ENCODE measurements at regions of chr1 and their contacts with region 1.

Region 1: DNA sequence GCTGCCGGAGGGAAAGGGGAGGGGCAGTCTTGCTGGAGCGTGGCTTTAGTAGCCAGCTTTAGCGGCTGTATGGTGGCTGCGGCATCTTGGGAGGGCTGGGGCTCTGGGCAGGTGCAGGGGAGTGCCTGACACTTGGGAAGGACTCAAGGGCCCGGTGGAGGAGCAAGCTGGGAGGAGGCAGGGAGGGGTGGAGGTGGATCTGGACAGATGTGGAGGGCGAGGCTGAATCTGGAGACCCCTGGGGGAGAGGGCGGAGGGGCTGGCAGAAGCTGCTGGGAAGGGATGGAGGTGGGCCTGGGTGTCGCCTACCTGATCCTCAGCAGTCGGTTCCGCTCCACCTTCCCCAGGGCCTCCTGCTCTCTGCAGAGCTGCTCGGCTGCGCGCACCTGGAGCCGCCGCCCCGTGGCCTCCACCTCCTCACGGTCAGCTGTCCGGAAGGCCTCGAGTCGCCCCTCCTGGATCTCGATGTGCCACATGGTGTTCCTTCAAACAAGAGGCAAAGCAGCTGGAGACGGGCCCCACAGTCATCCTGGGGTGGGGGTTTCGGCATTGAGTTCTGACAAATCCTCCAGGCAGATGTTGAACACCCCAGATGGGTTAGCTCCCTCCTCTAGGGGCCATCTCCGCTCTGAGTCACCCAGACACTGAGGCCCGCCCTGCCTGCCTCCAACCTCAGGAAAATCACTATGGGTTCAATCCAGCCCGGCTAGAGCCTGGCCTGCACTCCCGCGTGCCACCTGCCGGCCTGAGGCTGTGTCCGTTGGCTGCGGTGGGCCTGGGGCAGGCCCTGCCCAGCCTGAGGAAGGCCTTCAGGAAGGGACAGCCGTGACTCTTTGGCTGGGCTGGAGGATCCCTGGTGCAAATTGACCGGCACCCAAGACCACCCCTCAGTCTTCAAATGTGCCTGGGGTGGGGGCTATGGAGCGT is 29.6 kb downstream of the CFAP74 start:
- DNase-seq: no peak
- H3K4me3 ChIP-seq: no peak overlapping the region
- H3K27ac ChIP-seq: no peak overlapping the region
- H3K4me1 ChIP-seq: no peaks in the 10 kb centered on the region
- H3K27me3 ChIP-seq: no peaks in the 10 kb centered on the region
- CTCF ChIP-seq: no peak
- EP300 ChIP-seq: no peak
- POLR2A ChIP-seq: no peak

Region 2: DNA sequence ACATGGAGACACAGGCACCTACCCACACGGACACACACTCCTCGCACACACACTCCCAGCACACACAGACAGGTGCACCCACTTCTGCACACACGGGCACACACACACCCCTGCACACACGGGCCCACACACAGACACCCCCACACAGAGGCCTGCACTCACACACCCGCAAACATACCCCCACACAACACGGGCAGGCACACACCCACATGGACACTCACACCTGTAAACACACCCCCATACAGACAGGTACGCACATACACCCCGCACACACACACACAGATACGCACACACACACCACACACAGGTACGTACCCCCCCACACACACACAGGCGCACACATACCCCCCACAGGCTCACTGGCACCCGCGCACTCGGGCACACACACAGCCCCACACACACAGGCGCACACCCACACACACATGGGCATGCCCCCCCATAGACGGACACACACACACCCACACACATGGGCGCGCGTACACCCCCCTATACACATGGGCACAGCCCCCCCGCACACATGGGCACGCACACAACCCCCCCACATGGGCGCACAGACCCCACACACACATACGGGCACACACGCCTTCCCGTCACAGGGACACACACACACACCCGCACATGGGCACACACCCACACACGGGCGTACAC is 455.9 kb before region 1 on chr1:
- intact Hi-C with region 1: no loop called
- DNase-seq: no peak
- H3K4me3 ChIP-seq: no peak overlapping the region
- H3K27ac ChIP-seq: no peak overlapping the region
- H3K4me1 ChIP-seq: no peaks in the 10 kb centered on the region
- H3K27me3 ChIP-seq: no peaks in the 10 kb centered on the region
- CTCF ChIP-seq: no peak
- EP300 ChIP-seq: no peak
- POLR2A ChIP-seq: no peak

Region 3: DNA sequence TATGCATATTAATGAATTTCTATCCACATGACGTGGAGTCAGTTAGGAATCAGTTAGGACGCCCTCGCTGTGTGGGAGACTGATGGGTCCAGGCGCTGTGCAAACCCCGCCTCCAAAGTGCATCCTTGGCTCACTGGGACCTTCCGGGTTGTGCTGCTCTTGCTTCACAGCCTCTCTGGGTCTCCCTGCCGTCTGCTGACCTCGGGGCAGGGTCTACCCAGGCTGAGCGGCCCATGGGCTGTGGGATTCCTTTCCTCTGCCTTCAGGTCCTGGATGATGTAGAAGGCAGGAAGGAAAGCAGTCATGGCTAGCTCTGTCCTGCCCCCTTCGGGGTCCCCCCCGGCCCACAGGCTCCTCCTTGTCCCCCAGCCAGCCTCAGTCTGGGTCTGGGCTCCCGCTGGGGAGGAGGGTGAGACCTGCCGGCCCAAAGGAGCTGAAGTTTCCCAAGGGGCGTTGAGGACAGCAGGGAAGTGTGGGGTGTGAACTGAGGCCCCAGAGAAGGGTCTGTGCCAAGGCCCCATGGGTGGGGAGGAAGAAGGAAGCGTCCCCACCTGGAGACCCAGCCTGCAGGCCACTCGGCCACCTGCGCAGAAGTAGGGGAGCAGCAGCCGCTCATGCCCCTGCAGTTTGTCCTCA is 225.2 kb before region 1 on chr1:
- intact Hi-C with region 1: no loop called
- DNase-seq: peak in 1 of 5 donors; percentile 40
- H3K4me3 ChIP-seq: no peak overlapping the region
- H3K27ac ChIP-seq: no peak overlapping the region
- H3K4me1 ChIP-seq: no peaks in the 10 kb centered on the region
- H3K27me3 ChIP-seq: no peaks in the 10 kb centered on the region
- CTCF ChIP-seq: no peak
- EP300 ChIP-seq: no peak
- POLR2A ChIP-seq: no peak

Region 4: GRCh38 chr1:2025534-2025981 is 51.6 kb after region 1 on chr1:
- intact Hi-C with region 1: loop called in 2 of 4 experiments (anchors 5 to 10 kb)
- DNase-seq: peak; percentile 54 to 83 (median 59)
- H3K4me3 ChIP-seq: no peak overlapping the region
- H3K27ac ChIP-seq: no peak overlapping the region
- H3K4me1 ChIP-seq: peaks cover 4% of the 10 kb centered on the region
- H3K27me3 ChIP-seq: no peaks in the 10 kb centered on the region
- CTCF ChIP-seq: no peak
- EP300 ChIP-seq: no peak
- POLR2A ChIP-seq: no peak

Measured in ovary (tissue), 10 donors.